Activated CD4-positive, alpha-beta memory T cell treated with anti-CD3 and anti-CD28 coated beads for 36 hours (primary cell): ENCODE measurements at regions of chr17 and their contacts with region 1.

Region 1: DNA sequence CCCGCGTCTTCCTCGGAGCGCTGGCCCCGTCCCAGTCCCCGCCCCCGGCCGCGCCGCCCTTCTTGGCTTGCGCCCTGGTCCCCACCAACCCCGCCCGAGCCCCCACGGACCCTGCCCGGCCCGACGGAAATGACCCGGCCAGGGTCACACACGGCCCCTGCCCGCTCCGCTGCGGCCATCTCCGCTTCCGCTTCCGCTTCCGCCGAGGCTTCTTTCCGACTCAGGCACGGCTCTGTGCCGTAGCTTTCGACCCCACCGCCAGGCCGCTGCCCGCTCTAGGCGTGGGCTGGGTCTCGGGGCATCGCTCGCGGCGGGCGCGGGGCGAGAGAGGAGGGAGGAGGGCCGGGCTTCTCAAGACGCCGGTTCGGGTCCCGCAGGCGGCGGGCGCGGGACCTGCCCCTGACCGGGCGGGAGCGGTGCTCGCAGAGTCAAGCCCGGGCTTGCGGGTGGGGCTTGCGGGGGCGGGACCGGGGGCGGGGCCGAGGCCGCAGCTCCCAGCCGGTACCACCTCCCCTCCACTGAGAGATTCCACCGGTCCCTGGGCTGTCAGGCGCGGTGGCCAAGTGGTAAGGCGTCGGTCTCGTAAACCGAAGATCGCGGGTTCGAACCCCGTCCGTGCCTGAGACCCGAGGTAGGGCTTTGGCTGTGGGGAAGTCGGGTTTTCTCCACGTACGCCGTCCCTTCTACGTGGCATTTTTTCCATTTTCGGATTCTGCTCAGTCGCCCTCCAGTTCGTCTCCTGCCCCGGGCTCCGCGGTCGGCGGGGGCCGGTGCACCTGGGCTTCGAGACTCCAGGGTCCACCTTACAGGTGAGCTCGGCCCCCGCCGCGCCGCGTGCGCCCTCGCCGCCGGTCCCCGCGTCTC is 158.3 kb downstream of the RAB11FIP4 start:
- DNase-seq: peak; percentile 96
- H3K4me3 Mint-ChIP-seq: peak overlapping the region; percentile 95
- H3K27ac Mint-ChIP-seq: peak overlapping the region; percentile 87
- H3K4me1 Mint-ChIP-seq: peaks cover 18% of the 10 kb centered on the region
- H3K27me3 Mint-ChIP-seq: no peaks in the 10 kb centered on the region

Region 2: GRCh38 chr17:31533546-31534155 is 16.1 kb before region 1 on chr17:
- CTCF ChIA-PET with region 1: no interaction called
- POLR2A ChIA-PET with region 1: no interaction called
- intact Hi-C with region 1: no loop called
- DNase-seq: peak; percentile 41
- H3K4me3 Mint-ChIP-seq: no peak overlapping the region
- H3K27ac Mint-ChIP-seq: no peak overlapping the region
- H3K4me1 Mint-ChIP-seq: peaks cover 16% of the 10 kb centered on the region
- H3K27me3 Mint-ChIP-seq: no peaks in the 10 kb centered on the region

Region 3: DNA sequence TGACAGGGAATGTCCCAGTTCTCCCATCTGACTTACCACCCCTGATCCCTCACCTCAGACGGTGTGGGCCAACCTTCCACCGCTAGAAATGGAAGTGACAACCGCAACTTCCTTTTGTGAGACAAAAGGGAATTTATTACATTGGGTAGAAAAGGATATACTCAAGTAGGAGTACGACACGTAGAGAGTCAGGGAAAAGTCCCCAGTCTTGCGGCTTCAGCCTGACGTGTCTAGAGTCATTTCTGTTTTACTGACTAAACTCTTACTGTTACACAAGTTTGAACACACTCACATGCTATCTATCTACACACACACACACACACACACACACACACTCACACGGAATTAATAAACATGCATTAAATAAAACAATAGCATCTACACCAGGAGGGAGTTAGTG is 130.4 kb after region 1 on chr17:
- CTCF ChIA-PET with region 1: no interaction called
- POLR2A ChIA-PET with region 1: no interaction called
- intact Hi-C with region 1: loop called (anchors 10 kb)
- DNase-seq: peak; percentile 82
- H3K4me3 Mint-ChIP-seq: no peak overlapping the region
- H3K27ac Mint-ChIP-seq: peak overlapping the region; percentile 19
- H3K4me1 Mint-ChIP-seq: peaks cover 12% of the 10 kb centered on the region
- H3K27me3 Mint-ChIP-seq: peaks cover 32% of the 10 kb centered on the region

Region 4: GRCh38 chr17:31907342-31907962 is 357.7 kb after region 1 on chr17:
- CTCF ChIA-PET with region 1: no interaction called
- POLR2A ChIA-PET with region 1: no interaction called
- intact Hi-C with region 1: loop called (anchors 10 kb)
- DNase-seq: no peak
- H3K4me3 Mint-ChIP-seq: no peak overlapping the region
- H3K27ac Mint-ChIP-seq: no peak overlapping the region
- H3K4me1 Mint-ChIP-seq: peaks cover 10% of the 10 kb centered on the region
- H3K27me3 Mint-ChIP-seq: peaks cover 4% of the 10 kb centered on the region